ENCODE measurements at regions of chr7 and their contacts with region 1.

Region 1: GRCh38 chr7:128455551-128456254 is at the start of gene HILPDA:
- DNase-seq: peak; percentile 98
- ATAC-seq: peak; percentile 81
- H3K4me3 Mint-ChIP-seq: peak within 1 kb of the TSS; percentile 83
- H3K27ac Mint-ChIP-seq: peak within 1 kb of the TSS; percentile 99
- H3K4me1 Mint-ChIP-seq: peaks cover 60% of the 10 kb centered on the region
- H3K27me3 Mint-ChIP-seq: peaks cover 8% of the 10 kb centered on the region
- total RNA-seq, gene HILPDA: 227 to 309 TPM

Region 2: DNA sequence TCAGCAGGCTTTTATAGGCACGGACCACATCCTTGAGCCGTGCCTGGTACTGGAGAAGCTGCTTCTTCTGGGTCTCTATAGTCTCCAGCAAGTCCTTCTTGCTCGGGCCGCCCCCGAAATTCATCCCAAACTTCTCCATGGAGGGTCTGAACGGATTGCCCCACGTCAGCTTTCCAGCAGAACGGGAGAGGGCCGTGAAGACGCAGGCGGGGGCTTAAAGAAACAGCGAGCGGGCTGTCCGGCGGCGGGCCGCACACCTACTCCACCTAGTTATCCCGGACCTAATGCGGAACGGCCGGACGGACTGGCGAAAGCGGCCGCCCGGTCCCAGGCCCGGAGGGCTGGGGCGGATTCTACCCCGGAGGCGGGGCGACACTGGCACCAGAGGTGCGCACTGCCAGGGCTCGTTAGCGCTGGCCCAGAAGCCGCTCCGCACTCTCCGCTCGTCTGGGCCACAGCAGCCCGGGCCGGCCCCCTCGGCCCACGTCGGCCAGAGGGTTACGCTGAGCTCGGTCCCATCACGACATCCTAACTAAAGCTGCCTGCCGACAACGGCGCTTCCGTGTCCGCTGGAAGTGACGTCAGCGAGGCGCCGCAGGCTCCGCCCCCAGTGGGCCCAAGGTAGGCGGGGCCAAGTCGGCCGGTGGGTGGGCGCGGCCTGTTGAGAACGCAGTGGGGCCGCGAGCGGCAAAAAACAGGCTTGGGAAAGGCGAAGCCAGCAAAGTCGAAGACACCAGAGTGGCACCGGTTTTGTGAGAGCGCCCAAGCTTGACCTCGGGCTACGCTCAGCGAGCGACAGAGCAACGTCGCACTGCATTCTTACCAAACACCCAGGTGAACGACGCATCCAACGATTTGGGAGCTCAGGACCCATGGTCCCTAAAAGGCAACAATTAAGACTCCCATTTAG is 870.4 kb before region 1 on chr7 and contains the start of gene GCC1:
- CTCF ChIA-PET with region 1: no interaction called
- POLR2A ChIA-PET with region 1: no interaction called
- intact Hi-C with region 1: loop called in 1 of 2 experiments (anchors 5 kb)
- DNase-seq: peak; percentile 96
- ATAC-seq: peak; percentile 84
- H3K4me3 Mint-ChIP-seq: peak within 1 kb of the TSS; percentile 88
- H3K27ac Mint-ChIP-seq: peak within 1 kb of the TSS; percentile 91
- H3K4me1 Mint-ChIP-seq: peaks cover 68% of the 10 kb centered on the region
- H3K27me3 Mint-ChIP-seq: no peaks in the 10 kb centered on the region
- total RNA-seq, gene GCC1: 11.5 to 13.9 TPM

Region 3: DNA sequence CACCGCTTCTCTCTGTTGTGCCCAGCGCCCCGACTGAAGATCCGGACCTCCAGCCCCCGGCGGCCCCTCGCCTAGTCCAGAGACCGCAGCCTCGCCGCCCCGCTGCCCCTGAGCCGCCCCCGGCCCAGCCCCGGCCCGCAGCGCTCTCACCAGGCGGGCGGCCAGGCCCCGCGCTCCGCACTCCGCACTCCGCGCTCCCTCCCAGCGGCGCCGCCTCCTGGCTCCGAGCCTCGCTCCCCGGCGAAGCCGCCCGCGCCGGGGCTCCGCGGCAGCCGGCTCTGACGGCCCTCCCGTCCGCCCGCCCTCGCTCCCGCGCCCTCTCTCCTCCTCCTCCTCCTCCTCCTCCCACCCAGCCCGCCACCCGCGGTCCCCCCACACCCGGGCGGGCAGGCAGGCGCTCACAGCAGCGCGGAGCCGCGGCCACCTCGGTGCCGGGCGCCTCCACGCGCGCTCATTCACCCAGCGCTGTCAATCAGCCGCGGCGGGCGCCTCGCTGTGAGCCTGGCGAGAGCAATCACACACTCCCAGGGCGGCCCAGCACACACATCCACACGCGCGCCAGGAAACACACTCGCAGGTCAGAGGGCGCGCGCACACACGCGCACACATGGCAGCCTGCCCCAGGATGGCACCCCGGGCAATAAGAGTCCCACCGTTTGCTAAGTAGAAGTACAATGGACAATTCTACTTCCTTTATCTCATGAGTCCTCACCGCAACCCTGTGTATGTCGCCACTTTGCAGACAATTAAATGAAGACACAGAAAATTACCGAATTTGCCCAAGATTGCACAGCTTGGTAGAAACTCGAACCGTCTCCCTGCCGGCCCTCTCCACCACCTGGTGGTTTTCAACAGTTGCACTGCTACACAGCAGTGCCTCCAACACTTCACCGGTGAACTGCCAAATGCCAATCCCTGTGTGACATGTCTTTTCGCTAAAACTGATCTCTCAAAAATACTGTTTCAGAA is 94.0 kb before region 1 on chr7 and contains the start of gene PRRT4:
- CTCF ChIA-PET with region 1: no interaction called
- POLR2A ChIA-PET with region 1: no interaction called
- intact Hi-C with region 1: loop called in 1 of 2 experiments (anchors 1 kb)
- DNase-seq: peak; percentile 59
- ATAC-seq: peak; percentile 53
- H3K4me3 Mint-ChIP-seq: peak within 1 kb of the TSS; percentile 68
- H3K27ac Mint-ChIP-seq: peak within 1 kb of the TSS; percentile 64
- H3K4me1 Mint-ChIP-seq: peaks cover 24% of the 10 kb centered on the region
- H3K27me3 Mint-ChIP-seq: peaks cover 48% of the 10 kb centered on the region
- total RNA-seq, gene PRRT4: 0.23 to 0.39 TPM

Region 4: DNA sequence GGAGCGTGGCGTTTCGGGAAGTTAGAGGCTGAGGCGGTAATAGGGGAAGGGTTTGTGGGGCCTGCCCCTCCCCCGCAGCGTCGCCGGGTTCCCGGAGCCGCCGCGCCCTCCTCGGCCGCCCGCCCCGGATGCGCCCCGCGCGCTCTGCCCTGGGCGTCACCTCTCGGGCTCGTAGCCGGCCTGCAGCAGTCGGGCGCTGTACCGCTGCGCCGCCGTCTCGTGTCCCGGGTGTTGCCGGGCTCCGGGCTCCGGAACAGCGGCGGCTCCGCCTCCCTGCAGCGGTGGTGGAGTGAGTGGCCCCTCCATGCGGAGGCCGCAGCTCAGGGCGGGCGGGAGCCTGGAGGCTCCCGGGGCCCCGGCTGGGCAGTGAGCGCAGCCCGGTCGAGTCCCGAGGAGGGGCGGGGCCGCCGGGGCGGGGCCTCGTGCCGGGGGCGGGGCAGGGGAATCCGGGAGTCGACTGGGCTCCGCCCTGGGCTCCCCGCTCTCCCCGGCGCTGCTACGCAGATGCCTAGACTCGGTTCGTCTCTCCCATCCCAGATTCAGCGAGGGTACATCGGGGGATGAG is 46.0 kb before region 1 on chr7 and contains the start of gene IMPDH1:
- CTCF ChIA-PET with region 1: interaction called, 6 read pairs
- POLR2A ChIA-PET with region 1: no interaction called
- intact Hi-C with region 1: loop called in 1 of 2 experiments (anchors 1 kb)
- DNase-seq: peak; percentile 92
- ATAC-seq: peak; percentile 85
- H3K4me3 Mint-ChIP-seq: peak within 1 kb of the TSS; percentile 78
- H3K27ac Mint-ChIP-seq: peak within 1 kb of the TSS; percentile 78
- H3K4me1 Mint-ChIP-seq: peaks cover 27% of the 10 kb centered on the region
- H3K27me3 Mint-ChIP-seq: no peaks in the 10 kb centered on the region
- total RNA-seq, gene IMPDH1: 59.0 to 60.7 TPM

Region 5: DNA sequence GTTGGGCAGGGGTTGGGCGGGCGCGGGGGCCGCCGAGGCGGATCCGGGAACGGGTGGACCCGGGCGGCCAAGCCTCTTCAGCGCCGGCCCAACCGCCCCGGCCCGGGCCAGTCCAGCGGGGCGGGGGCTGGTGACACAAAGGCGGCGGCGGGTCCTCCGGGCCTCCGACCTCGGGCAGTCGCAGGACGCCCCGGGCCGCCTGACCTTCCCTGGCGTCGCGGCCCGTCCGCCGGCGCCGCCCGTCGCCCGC is 75.1 kb after region 1 on chr7:
- CTCF ChIA-PET with region 1: no interaction called
- POLR2A ChIA-PET with region 1: no interaction called
- intact Hi-C with region 1: loop called (anchors 1 to 10 kb)
- DNase-seq: no peak
- ATAC-seq: no peak
- H3K4me3 Mint-ChIP-seq: peak overlapping the region; percentile 95
- H3K27ac Mint-ChIP-seq: no peak overlapping the region
- H3K4me1 Mint-ChIP-seq: peaks cover 27% of the 10 kb centered on the region
- H3K27me3 Mint-ChIP-seq: no peaks in the 10 kb centered on the region

Region 6: DNA sequence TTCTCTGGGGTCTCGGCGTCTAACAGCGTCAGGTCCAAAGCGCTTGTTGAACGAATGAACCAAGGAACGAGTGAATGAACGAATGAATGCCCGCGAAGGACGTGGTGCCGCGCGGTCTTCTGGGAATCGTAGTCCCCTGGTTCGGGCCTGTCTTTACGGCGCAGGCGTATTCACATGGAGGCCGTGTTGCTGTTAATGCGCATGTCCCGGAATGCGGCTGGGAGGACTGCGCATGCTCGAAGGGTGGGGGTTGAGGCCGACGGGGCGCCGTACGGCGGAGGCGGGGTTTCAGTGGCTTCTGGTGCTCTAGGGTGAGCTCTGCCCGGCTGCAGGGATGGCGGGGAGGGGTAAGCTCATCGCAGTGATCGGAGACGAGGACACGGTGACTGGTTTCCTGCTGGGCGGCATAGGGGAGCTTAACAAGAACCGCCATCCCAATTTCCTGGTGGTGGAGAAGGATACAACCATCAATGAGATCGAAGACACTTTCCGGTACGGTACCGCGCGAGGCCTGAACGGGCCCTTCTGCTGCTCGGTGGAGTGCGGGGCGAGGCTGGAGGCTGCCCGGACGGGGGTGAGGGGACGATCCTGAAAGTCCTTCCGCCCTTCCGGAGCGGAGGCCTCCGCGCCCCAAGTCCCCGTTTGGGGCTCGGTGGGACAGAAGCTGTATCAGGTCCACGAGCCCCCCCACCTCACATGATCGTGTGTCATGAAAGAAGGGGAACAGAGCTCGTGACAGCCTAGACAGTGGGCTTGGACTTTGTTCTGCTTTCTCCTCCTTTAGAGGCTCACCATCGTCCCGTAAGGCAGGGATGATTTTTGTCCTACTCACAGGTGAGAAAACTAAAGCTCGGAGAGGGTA is 407.1 kb after region 1 on chr7 and contains the start of gene ATP6V1F:
- CTCF ChIA-PET with region 1: no interaction called
- POLR2A ChIA-PET with region 1: no interaction called
- intact Hi-C with region 1: loop called in 1 of 2 experiments (anchors 1 kb)
- DNase-seq: peak; percentile 100
- ATAC-seq: peak; percentile 91
- H3K4me3 Mint-ChIP-seq: peak within 1 kb of the TSS; percentile 77
- H3K27ac Mint-ChIP-seq: peak within 1 kb of the TSS; percentile 90
- H3K4me1 Mint-ChIP-seq: peaks cover 13% of the 10 kb centered on the region
- H3K27me3 Mint-ChIP-seq: no peaks in the 10 kb centered on the region
- total RNA-seq, gene ATP6V1F: 109 to 159 TPM

Region 7: GRCh38 chr7:129054438-129055293 is 599.0 kb after region 1 on chr7 and contains the start of gene TNPO3:
- CTCF ChIA-PET with region 1: no interaction called
- POLR2A ChIA-PET with region 1: no interaction called
- intact Hi-C with region 1: loop called in 1 of 2 experiments (anchors 1 kb)
- DNase-seq: peak; percentile 94
- ATAC-seq: peak; percentile 91
- H3K4me3 Mint-ChIP-seq: peak within 1 kb of the TSS; percentile 89
- H3K27ac Mint-ChIP-seq: peak within 1 kb of the TSS; percentile 99
- H3K4me1 Mint-ChIP-seq: peaks cover 28% of the 10 kb centered on the region
- H3K27me3 Mint-ChIP-seq: peaks cover 3% of the 10 kb centered on the region
- total RNA-seq, gene TNPO3: 57.7 to 60.5 TPM